Transverse colon (tissue), 4 donors: ENCODE measurements at regions of chr2 and their contacts with region 1.

Region 1: GRCh38 chr2:177332041-177332991 is 60.3 kb upstream of the AGPS start:
- DNase-seq: peak; percentile 33
- H3K4me3 ChIP-seq: no peak overlapping the region
- H3K27ac ChIP-seq: peak overlapping the region; percentile 22 to 67 (median 60)
- H3K4me1 ChIP-seq: peaks cover 0 to 12% (median 0%) of the 10 kb centered on the region in 4 donors
- H3K27me3 ChIP-seq: no peaks in the 10 kb centered on the region
- CTCF ChIP-seq: peak; percentile 53 to 85 (median 63)
- EP300 ChIP-seq: no peak
- POLR2A ChIP-seq: no peak

Region 2: GRCh38 chr2:177164584-177165052 is 167.7 kb before region 1 on chr2:
- in situ Hi-C with region 1: loop called (anchors 5 to 10 kb)
- intact Hi-C with region 1: loop called (anchors 10 kb)
- DNase-seq: peak; percentile 89
- H3K4me3 ChIP-seq: peak overlapping the region; percentile 11 to 41 (median 31)
- H3K27ac ChIP-seq: peak overlapping the region; percentile 83 to 90 (median 87)
- H3K4me1 ChIP-seq: peaks cover 0 to 40% (median 20%) of the 10 kb centered on the region in 4 donors
- H3K27me3 ChIP-seq: no peaks in the 10 kb centered on the region
- CTCF ChIP-seq: peak; percentile 100
- EP300 ChIP-seq: no peak
- POLR2A ChIP-seq: no peak

Region 3: DNA sequence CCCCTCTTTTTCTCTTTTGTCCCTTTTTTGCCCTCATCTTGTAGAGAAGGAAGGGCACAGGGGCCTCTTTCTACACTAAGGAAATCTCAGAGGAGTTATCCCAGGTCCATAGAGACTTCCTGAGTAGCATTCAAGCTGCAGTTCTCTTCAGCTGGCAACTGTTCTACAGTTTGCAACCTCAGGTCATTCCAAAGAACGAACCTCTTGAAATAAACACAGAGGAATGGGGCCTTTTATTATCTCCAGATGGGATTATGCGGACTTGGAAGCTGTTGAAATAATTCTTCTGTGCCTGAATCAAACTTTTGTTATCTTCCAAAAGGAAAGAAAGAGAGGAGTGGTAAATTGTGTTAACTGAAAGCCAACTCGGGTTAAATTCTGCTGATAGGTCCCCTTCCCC is 36.8 kb before region 1 on chr2:
- in situ Hi-C with region 1: no loop called
- intact Hi-C with region 1: loop called (anchors 1 kb)
- DNase-seq: no peak
- H3K4me3 ChIP-seq: no peak overlapping the region
- H3K27ac ChIP-seq: peak overlapping the region; percentile 31 to 71 (median 54)
- H3K4me1 ChIP-seq: peaks cover 0 to 11% (median 6%) of the 10 kb centered on the region in 4 donors
- H3K27me3 ChIP-seq: no peaks in the 10 kb centered on the region
- CTCF ChIP-seq: no peak
- EP300 ChIP-seq: no peak
- POLR2A ChIP-seq: no peak

Region 4: GRCh38 chr2:177419274-177419673 is 87.0 kb after region 1 on chr2:
- in situ Hi-C with region 1: loop called in 3 of 4 experiments (anchors 5 to 10 kb)
- intact Hi-C with region 1: loop called (anchors 10 kb)
- DNase-seq: no peak
- H3K4me3 ChIP-seq: no peak overlapping the region
- H3K27ac ChIP-seq: no peak overlapping the region
- H3K4me1 ChIP-seq: peaks cover 0 to 35% (median 9%) of the 10 kb centered on the region in 4 donors
- H3K27me3 ChIP-seq: no peaks in the 10 kb centered on the region
- CTCF ChIP-seq: no peak
- EP300 ChIP-seq: no peak
- POLR2A ChIP-seq: no peak

Region 5: GRCh38 chr2:177618255-177619253 is 286.2 kb after region 1 on chr2:
- in situ Hi-C with region 1: loop called in 2 of 4 experiments (anchors 25 kb)
- intact Hi-C with region 1: no loop called
- DNase-seq: peak; percentile 92
- H3K4me3 ChIP-seq: peak overlapping the region; percentile 67 to 97 (median 75)
- H3K27ac ChIP-seq: peak overlapping the region; percentile 90 to 98 (median 91)
- H3K4me1 ChIP-seq: peaks cover 0 to 8% (median 5%) of the 10 kb centered on the region in 4 donors
- H3K27me3 ChIP-seq: no peaks in the 10 kb centered on the region
- CTCF ChIP-seq: peak in 1 of 5 experiments; percentile 9
- EP300 ChIP-seq: no peak
- POLR2A ChIP-seq: peak; percentile 45

Region 6: GRCh38 chr2:177763532-177764265 is 431.4 kb after region 1 on chr2:
- in situ Hi-C with region 1: loop called in 1 of 4 experiments (anchors 10 kb)
- intact Hi-C with region 1: no loop called
- DNase-seq: peak; percentile 78
- H3K4me3 ChIP-seq: no peak overlapping the region
- H3K27ac ChIP-seq: no peak overlapping the region
- H3K4me1 ChIP-seq: peaks cover 0 to 7% (median under 1%) of the 10 kb centered on the region in 4 donors
- H3K27me3 ChIP-seq: no peaks in the 10 kb centered on the region
- CTCF ChIP-seq: peak; percentile 64 to 84 (median 81)
- EP300 ChIP-seq: no peak
- POLR2A ChIP-seq: no peak